K562 (cell line): ENCODE measurements at regions of chr12 and their contacts with region 1.

Region 1: GRCh38 chr12:50597200-50598195 is 92.7 kb downstream of the DIP2B start:
- DNase-seq: peak in 2 of 4 experiments; percentile 60 to 73
- ATAC-seq: peak; percentile 85
- H3K4me3 ChIP-seq: no peak overlapping the region
- H3K27ac ChIP-seq: peak overlapping the region; percentile 50; the same call in 1 of the 3 replicates
- H3K4me1 ChIP-seq: peaks cover 0 to 19% of the 10 kb centered on the region in 2 experiments; a peak in 4 of 5 replicates
- H3K27me3 ChIP-seq: no peaks in the 10 kb centered on the region
- CTCF ChIP-seq: peak in 2 of 3 experiments; percentile 18 to 20; a peak in 1 of 6 replicates
- EP300 ChIP-seq: no peak; the same call in 1 of the 2 replicates
- POLR2A ChIP-seq: no peak
- RAD21 ChIP-seq: peak in 1 of 2 experiments; percentile 43; a peak in 3 of 4 replicates

Region 2: DNA sequence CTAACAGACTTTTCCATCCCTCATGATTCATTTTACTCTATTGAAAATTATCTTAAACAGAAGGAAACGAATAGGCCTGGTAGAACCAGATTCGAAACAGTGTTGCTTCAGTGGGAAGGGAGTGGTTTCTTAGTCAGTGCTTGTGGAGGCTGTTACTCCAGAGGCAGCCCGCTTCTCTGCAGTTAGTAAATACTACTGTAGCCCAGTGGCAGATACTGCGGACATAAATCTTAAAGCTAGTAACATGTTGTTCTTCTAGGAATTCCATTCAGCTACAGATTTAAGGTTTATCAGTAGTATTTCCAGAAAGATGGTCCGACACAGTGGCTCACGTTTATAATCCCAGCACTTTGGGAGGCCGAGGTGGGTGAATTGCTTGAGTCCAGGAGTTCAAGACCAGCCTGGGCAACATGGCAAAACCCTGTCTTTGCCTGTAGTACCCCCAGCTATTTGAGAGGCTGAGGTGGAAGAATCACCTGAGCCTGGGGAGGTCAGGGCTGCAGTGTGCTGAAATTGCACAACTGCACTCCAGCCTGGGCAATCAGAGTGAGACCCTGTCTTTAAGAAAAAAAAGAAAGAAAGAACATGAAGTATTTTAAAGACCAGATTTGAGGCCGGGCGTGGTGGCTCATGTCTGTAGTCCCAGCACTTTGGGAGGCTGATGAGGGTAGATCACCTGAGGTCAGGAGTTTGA is 46.8 kb before region 1 on chr12:
- CTCF ChIA-PET with region 1: no interaction called
- POLR2A ChIA-PET with region 1: no interaction called
- in situ Hi-C with region 1: no loop called
- intact Hi-C with region 1: loop called (anchors 5 kb)
- DNase-seq: peak; percentile 31 to 78 (median 49)
- ATAC-seq: peak; percentile 92
- H3K4me3 ChIP-seq: no peak overlapping the region
- H3K27ac ChIP-seq: peak overlapping the region; percentile 67; the same call in 2 of the 3 replicates
- H3K4me1 ChIP-seq: peaks cover 28 to 41% of the 10 kb centered on the region in 2 experiments
- H3K27me3 ChIP-seq: no peaks in the 10 kb centered on the region
- CTCF ChIP-seq: no peak
- EP300 ChIP-seq: peak; percentile 34; the same call in 1 of the 2 replicates
- POLR2A ChIP-seq: no peak
- RAD21 ChIP-seq: peak in 1 of 2 experiments; percentile 18; a peak in 1 of 4 replicates

Region 3: GRCh38 chr12:50699940-50700339 is 102.4 kb after region 1 on chr12:
- CTCF ChIA-PET with region 1: no interaction called
- POLR2A ChIA-PET with region 1: no interaction called
- in situ Hi-C with region 1: no loop called
- intact Hi-C with region 1: no loop called
- DNase-seq: no peak
- ATAC-seq: no peak
- H3K4me3 ChIP-seq: no peak overlapping the region
- H3K27ac ChIP-seq: no peak overlapping the region
- H3K4me1 ChIP-seq: no peaks in the 10 kb centered on the region
- H3K27me3 ChIP-seq: no peaks in the 10 kb centered on the region
- CTCF ChIP-seq: no peak
- EP300 ChIP-seq: no peak
- POLR2A ChIP-seq: no peak
- RAD21 ChIP-seq: no peak

Region 4: GRCh38 chr12:50775251-50775650 is 177.8 kb after region 1 on chr12:
- CTCF ChIA-PET with region 1: no interaction called
- POLR2A ChIA-PET with region 1: no interaction called
- in situ Hi-C with region 1: no loop called
- intact Hi-C with region 1: no loop called
- DNase-seq: no peak
- ATAC-seq: no peak
- H3K4me3 ChIP-seq: no peak overlapping the region
- H3K27ac ChIP-seq: no peak overlapping the region
- H3K4me1 ChIP-seq: no peaks in the 10 kb centered on the region; a peak in 2 of 5 replicates
- H3K27me3 ChIP-seq: no peaks in the 10 kb centered on the region
- CTCF ChIP-seq: no peak
- EP300 ChIP-seq: no peak
- POLR2A ChIP-seq: no peak
- RAD21 ChIP-seq: no peak